BJ (cell line): ENCODE measurements at regions of chr5 and their contacts with region 1.

Region 1: DNA sequence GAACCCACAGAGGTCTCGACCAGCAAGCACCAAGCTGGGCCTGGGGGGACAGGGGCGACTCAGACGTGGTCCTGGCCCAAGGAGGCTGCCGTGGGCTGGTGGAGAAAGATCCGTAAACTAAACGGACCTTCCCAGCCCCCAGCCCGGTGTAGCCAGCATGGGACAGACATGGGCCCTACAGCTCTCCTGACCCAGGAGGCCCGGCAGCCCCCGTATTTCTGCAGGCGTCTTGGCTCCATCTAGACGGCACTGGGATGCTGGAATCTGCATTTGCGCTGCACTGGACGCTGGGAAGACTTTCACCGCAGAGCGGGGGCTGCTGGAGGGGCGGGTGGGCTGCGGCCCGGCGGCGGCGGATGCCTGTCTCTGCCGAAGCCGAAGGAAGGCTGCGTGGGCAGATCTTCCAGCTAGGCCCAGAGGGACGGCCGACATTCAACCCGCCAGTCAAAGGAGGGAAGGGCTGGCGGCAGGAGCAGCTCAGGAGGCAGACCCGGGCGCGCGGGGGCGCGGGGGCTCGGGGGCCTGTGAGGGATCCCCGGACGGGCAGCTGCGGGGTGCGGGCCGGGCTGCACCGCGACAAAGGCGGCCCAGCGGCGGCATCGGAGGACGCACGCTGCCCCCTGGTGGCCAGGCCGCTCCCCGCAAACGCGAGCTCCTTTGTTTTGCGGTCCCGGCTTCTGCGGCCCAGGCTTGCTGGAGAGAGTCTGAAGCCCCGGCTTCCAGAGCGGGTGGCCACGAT is 266.2 kb downstream of the NSG2 start:
- DNase-seq: no peak
- H3K4me3 ChIP-seq: peak overlapping the region; percentile 40
- H3K27me3 ChIP-seq: no peaks in the 10 kb centered on the region
- CTCF ChIP-seq: peak; percentile 74

Region 2: DNA sequence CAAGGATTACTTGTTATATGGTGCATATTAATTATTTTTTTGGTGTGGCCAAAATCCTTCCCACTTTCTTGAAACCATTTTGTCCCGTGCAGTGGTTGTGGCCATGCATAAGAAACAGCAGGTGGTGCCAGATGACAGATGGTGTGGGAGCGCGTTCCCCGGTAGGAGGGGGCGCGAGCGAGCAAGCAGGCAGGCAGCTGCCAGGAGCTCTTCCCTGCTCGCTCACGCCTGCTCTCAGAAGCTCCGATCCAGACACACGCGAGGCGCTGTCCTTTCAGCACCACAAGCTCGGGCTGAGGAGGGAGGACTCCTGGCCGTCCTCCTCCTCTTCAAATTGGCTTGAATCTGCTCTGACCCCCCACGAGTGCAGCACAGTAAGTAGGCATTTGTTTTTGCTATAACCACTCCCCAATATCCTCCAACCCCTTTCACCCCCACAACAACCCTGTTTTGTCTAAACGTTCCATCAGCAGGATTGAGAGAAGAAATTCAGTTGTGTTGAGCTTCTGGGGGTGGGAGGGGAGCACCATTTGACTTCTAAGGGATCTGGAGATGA is 266.2 kb before region 1 on chr5 and contains the start of gene NSG2:
- CTCF ChIA-PET with region 1: interaction called, 45 read pairs
- POLR2A ChIA-PET with region 1: no interaction called
- DNase-seq: peak; percentile 31
- H3K4me3 ChIP-seq: no peak within 1 kb of the TSS
- H3K27me3 ChIP-seq: no peaks in the 10 kb centered on the region
- CTCF ChIP-seq: peak; percentile 57
- polyA plus RNA-seq, gene NSG2: 0.04 and 0.05 TPM in 2 replicates

Region 3: GRCh38 chr5:174259696-174260420 is 51.8 kb before region 1 on chr5:
- CTCF ChIA-PET with region 1: no interaction called
- POLR2A ChIA-PET with region 1: no interaction called
- DNase-seq: no peak
- H3K4me3 ChIP-seq: no peak overlapping the region
- H3K27me3 ChIP-seq: no peaks in the 10 kb centered on the region
- CTCF ChIP-seq: no peak

Region 4: GRCh38 chr5:174300941-174301761 is 10.5 kb before region 1 on chr5:
- CTCF ChIA-PET with region 1: interaction called, 12 read pairs
- POLR2A ChIA-PET with region 1: no interaction called
- DNase-seq: no peak
- H3K4me3 ChIP-seq: no peak overlapping the region
- H3K27me3 ChIP-seq: no peaks in the 10 kb centered on the region
- CTCF ChIP-seq: no peak

Region 5: DNA sequence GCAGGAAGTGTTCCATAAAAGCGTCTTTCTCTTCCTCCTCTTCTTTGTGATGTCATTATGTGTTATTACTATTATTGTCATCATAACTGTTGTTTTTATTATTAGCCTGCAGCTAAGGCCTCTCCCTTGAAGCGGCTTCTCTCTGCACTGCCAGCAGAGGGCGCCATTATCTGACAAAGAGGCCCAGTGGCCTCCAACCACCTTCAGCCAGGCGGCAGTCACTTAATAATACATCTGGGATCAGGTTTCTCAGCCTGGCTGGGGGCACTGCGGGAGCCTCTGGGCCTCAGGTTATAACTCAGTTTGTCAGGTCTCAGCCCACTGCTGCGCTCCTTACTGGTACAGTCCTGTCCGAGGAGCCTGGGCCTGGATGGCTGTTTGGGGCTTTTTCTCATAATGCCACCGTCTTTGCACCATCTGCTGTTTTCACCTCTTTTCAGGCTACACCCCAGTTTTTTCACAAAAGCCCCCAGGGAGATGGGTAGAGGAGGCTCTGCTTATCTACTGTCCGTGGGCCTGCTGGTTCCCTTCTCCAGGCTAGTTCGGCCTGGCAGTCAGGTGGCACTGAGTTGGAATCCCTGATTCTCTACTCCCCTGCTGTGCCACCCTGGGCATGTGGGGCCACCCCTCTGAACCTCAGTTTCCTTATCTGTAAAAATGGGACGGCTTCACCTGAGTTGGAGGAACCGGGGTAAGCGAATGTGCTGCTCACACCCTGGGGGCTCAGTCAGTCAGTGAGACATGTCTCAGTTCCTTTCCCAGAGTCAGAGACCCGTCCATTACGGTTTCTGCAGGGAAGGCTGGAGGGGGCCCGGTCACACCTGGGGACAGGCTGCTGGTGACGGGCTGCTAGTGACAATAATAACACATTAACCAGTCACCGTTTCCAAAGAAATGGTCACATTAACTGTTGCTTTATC is 15.9 kb after region 1 on chr5:
- CTCF ChIA-PET with region 1: interaction called, 33 read pairs
- POLR2A ChIA-PET with region 1: no interaction called
- DNase-seq: no peak
- H3K4me3 ChIP-seq: no peak overlapping the region
- H3K27me3 ChIP-seq: peaks cover 4% of the 10 kb centered on the region
- CTCF ChIP-seq: peak; percentile 85

Region 6: GRCh38 chr5:175387144-175387543 is 1075.4 kb after region 1 on chr5:
- CTCF ChIA-PET with region 1: no interaction called
- POLR2A ChIA-PET with region 1: no interaction called
- DNase-seq: no peak
- H3K4me3 ChIP-seq: no peak overlapping the region
- H3K27me3 ChIP-seq: no peaks in the 10 kb centered on the region
- CTCF ChIP-seq: no peak